ENCODE measurements at regions of chr21 and their contacts with region 1.

Region 1: DNA sequence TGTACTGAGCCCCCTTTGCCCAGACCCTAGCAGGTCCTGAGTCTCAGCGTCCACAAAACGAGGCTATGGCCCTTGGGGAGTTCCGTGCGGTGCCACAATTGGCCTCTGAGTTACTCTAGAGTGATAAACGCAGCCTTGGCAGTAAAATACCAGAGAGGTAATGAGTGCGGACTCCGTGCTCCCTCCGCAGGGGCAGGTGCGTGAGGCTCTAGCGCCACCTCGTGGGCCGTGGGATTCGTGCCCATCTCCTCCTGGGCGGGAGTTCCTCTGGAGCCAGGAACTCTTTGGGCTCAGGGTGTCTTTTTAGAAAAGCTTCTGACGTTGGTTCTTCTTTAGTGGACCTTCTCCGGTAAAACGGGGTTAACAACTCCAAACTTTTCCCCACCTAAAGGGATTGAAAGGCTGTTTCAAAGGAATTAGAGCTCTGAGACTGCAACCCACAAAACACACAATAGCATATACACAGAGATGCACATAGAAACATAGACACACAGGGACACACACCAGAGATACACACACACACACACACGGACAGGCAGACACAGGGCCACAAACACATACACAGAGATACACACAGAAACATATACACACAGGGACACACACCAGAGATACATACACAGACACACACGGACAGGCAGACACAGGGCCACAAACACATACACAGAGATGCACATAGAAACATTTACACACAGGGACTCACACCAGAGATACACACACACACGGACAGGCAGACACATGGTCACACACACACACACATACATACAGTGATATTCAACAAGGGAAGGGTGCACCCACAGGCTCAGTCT is 99.4 kb downstream of the KCNJ15 start:
- DNase-seq: peak; percentile 84 to 92
- H3K4me3 ChIP-seq: no peak overlapping the region
- H3K27ac ChIP-seq: no peak overlapping the region
- H3K4me1 ChIP-seq: peaks cover 13 to 24% (median 19%) of the 10 kb centered on the region in 4 donors
- H3K27me3 ChIP-seq: peaks cover 0 to 12% (median 0%) of the 10 kb centered on the region in 3 donors
- CTCF ChIP-seq: peak in 6 of 7 experiments; percentile 15 to 95 (median 85)
- EP300 ChIP-seq: no peak
- POLR2A ChIP-seq: no peak

Region 2: DNA sequence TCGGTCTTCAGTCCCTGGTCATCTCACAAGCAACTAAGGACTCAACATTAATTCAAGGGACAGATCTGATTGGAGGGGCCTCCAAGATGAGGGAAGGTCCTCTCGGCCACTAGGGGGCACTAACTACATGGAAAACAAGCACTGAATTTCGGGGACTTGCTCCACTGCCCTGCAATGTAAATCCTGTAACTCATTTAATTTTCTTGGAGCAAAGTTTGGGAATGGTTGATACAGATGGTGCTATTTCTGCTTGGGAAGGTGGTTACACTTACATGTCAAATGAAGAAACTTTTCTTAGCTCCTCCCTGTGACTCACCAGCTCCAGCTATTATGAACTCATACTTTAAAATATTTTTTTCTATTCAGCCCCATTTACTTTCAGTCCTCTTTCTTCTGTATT is 196.8 kb before region 1 on chr21:
- intact Hi-C with region 1: loop called (anchors 5 kb)
- DNase-seq: peak; percentile 70 to 86
- H3K4me3 ChIP-seq: no peak overlapping the region
- H3K27ac ChIP-seq: no peak overlapping the region
- H3K4me1 ChIP-seq: no peaks in the 10 kb centered on the region
- H3K27me3 ChIP-seq: no peaks in the 10 kb centered on the region
- CTCF ChIP-seq: peak in 5 of 7 experiments; percentile 55 to 86 (median 68)
- EP300 ChIP-seq: no peak
- POLR2A ChIP-seq: no peak

Region 3: DNA sequence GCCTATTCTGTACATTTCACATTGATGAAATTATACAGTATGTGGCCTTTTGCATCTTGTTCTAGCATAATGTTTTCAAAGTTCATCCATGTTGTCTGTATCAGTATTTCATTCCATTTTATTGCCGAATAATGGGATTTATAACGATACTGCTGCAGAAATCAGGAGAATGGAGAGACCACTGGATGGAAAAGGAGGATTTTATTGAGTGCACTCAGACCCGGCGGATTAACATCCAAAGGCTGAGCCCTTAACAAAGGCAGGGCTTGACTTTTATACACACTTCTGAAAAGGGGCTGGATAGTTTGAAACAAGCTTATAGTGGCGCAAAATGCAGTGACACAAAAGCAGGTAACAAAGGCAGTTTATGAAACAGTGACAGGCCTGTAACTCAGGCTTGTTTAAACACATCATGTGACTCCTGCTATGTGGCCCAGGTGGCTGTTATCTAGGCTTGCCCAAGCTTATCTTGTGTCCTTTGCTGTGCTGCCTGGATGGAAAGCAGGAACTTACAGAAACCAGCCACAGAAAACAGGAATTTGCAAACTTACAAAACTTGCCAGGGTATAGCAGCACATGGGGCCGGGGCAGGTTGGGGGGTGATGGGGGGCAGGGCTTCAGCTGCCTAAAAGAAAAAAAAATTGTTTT is 132.2 kb before region 1 on chr21:
- intact Hi-C with region 1: loop called (anchors 5 kb)
- DNase-seq: no peak
- H3K4me3 ChIP-seq: no peak overlapping the region
- H3K27ac ChIP-seq: no peak overlapping the region
- H3K4me1 ChIP-seq: peaks cover 0 to 25% (median 2%) of the 10 kb centered on the region in 4 donors
- H3K27me3 ChIP-seq: no peaks in the 10 kb centered on the region
- CTCF ChIP-seq: no peak
- EP300 ChIP-seq: no peak
- POLR2A ChIP-seq: no peak

Region 4: DNA sequence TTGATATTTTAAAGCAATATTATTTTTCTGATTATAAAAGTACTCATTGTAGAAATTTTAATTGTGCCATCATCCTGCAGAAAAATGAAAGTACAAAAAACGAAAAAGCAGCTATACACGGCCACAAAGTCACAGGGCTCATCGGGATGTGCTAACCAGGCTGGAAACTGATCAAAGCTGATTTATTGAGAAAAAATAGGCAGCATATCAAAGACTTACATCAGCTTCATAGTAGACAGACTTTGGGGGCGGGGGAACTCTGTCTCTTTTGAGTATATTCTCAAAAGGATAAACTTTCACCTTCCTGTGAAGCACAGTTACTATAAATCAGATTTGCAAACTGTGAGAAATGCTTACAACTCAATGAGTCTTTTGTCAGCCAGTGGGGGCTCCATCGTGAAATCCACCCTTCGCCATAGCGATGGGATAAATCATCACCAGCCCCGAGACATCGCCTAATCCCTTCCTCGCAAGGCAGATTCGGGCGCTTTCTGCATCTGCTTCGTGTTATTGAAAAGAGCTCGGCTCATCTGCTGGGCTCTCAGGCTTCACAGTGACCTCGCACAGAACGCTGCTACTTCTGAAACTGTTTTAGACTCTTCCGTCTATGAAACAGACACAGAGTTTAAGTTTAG is 211.3 kb after region 1 on chr21:
- intact Hi-C with region 1: no loop called
- DNase-seq: peak in 1 of 2 donors; percentile 44
- H3K4me3 ChIP-seq: peak overlapping the region in 3 of 4 donors; percentile 4 to 16 (median 7)
- H3K27ac ChIP-seq: no peak overlapping the region
- H3K4me1 ChIP-seq: peaks cover 0 to 5% (median 0%) of the 10 kb centered on the region in 4 donors
- H3K27me3 ChIP-seq: peaks cover 0 to 31% (median 8%) of the 10 kb centered on the region in 3 donors
- CTCF ChIP-seq: no peak
- EP300 ChIP-seq: no peak
- POLR2A ChIP-seq: no peak